RWPE1 (cell line): ENCODE measurements at regions of chr1 and their contacts with region 1.

Region 1: GRCh38 chr1:119613769-119614720 is 34.0 kb downstream of the ZNF697 start:
- DNase-seq: peak; percentile 61
- H3K27ac ChIP-seq: no peak overlapping the region
- CTCF ChIP-seq: peak; percentile 81

Region 2: GRCh38 chr1:119639109-119639508 is 25.1 kb after region 1 on chr1:
- CTCF ChIA-PET with region 1: no interaction called
- POLR2A ChIA-PET with region 1: no interaction called
- DNase-seq: no peak
- H3K27ac ChIP-seq: no peak overlapping the region
- CTCF ChIP-seq: no peak

Region 3: DNA sequence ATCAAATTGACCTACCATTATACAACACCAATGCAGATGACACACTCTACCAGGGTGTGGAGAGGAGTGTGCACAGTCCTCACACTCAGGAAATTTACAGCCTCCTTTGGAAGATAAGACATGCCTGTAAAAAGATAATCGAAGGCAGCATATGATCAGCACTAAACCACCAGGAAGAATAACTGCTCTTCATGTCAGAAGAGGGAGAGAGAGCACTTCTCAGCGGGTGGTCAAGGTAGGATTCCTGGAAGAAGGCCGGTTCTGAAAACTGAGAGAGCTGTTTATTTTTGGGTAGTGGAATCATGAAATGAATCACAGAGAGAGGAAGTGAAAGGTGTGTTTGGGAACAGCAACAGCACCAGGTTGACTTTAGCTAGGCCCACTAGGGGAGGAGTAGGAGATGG is 48.0 kb after region 1 on chr1:
- CTCF ChIA-PET with region 1: interaction called, 21 read pairs
- POLR2A ChIA-PET with region 1: no interaction called
- DNase-seq: no peak
- H3K27ac ChIP-seq: no peak overlapping the region
- CTCF ChIP-seq: no peak